ENCODE measurements at regions of chr3 and their contacts with region 1.

Region 1: DNA sequence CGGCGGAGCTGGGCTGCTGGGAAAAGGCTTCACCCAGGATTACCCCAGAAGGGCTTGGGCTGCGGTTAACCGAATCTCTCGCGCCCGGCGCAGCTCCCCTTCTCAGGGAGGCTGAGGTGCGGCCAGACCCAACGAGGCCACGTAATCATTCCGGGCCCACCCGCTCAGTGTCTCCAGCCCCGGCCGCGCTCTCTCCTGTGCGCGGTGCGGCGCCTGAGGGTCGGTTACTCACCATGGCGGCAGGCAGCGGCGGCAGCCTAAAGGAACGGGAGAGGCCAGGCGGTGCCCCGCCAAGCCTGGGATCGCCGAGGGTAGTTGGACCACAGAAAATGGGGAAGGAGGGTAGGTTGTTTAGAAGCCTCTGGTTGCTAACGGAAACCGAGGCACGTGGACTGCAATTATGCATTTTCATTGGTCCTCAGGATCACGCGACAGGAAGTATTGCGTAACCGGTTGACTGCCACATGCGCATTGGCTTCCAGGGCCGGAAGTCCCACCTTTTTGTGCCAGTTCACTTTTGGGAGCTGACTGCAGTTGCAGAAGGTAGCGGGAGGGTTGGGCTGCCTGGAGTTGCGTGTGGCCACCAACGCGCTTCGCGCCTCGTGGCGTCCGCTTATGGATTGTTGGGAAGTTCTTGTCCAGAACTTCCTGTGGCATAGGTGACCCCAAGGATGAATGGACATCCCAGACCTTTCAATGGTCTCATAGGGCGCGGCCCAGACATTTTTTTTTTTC is at the start of gene LZTFL1:
- DNase-seq: peak; percentile 81
- H3K4me3 Mint-ChIP-seq: peak within 1 kb of the TSS; percentile 90
- H3K27ac Mint-ChIP-seq: peak within 1 kb of the TSS; percentile 77
- H3K4me1 Mint-ChIP-seq: peaks cover 22% of the 10 kb centered on the region
- H3K27me3 Mint-ChIP-seq: peaks cover 26% of the 10 kb centered on the region
- total RNA-seq, gene LZTFL1: 5.2 and 6.5 TPM in 2 replicates

Region 2: GRCh38 chr3:45795882-45796765 is 45.8 kb before region 1 on chr3 and contains the start of gene SLC6A20:
- intact Hi-C with region 1: loop called (anchors 2 kb)
- DNase-seq: no peak
- H3K4me3 Mint-ChIP-seq: peak within 1 kb of the TSS; percentile 66
- H3K27ac Mint-ChIP-seq: no peak within 1 kb of the TSS
- H3K4me1 Mint-ChIP-seq: peaks cover 8% of the 10 kb centered on the region
- H3K27me3 Mint-ChIP-seq: peaks cover 70% of the 10 kb centered on the region
- total RNA-seq, gene SLC6A20: not detected in 2 replicates

Region 3: DNA sequence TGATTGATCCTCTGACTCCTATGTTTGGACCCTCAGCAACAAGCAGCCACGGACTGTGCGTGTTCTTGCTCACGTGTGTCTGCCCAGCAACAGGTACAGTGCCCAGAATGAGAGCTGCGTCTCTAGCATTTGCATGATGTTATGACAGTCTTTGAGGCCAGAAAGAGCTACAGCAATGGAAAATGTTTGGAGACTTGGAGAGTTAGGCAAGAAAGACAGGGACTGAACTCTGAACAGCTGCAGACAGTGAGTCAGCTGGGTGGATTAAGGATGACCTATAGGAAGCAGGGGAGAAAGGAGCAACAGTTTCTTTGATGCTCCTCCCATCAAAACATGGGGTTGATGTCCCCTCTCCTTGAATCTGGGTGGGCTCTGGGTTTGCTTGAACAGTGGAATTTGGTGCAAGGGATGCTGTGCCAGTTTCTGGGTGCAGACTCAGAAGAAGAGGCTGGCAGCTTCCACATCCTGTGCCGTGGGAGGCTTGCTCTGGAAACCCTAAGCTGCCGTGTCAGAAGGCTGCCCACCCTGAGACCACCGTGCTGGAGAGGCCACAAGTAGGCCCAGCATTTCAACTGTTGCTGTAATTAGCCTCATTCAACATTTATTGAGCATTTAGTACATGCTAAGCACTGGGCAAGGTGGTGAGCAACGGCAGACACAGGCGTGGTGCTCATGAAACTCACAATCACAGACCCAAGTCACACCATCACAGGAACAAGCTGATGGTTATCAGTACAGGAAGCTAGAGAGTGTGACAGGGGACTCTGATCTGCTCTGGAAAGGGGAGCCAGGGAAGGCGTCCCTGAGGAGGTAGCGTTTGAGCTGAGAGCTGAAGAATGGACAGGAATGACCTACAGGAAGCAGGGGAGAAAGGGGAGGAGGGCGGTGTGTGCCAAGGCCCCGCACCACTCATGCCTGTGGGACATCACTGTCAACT is 66.1 kb after region 1 on chr3:
- intact Hi-C with region 1: loop called (anchors 2 kb)
- DNase-seq: peak; percentile 19
- H3K4me3 Mint-ChIP-seq: no peak overlapping the region
- H3K27ac Mint-ChIP-seq: no peak overlapping the region
- H3K4me1 Mint-ChIP-seq: peaks cover 24% of the 10 kb centered on the region
- H3K27me3 Mint-ChIP-seq: peaks cover 34% of the 10 kb centered on the region

Measured in activated T-helper 1 cell treated with anti-CD3 and anti-CD28 coated beads, Interleukin-12 subunit alpha, Interleukin-12 subunit beta, Interleukin-2, Interleukin-4 antibody, amounts not matched to agents 30 ng/mL and 10 ng/mL and 1 ng/mL, durations not matched to agents 14 hours and 24 hours and 36 hours (primary cell).